Activated naive CD4-positive, alpha-beta T cell treated with anti-CD3 and anti-CD28 coated beads for 36 hours (primary cell): ENCODE measurements at regions of chr5 and their contacts with region 1.

Region 1: DNA sequence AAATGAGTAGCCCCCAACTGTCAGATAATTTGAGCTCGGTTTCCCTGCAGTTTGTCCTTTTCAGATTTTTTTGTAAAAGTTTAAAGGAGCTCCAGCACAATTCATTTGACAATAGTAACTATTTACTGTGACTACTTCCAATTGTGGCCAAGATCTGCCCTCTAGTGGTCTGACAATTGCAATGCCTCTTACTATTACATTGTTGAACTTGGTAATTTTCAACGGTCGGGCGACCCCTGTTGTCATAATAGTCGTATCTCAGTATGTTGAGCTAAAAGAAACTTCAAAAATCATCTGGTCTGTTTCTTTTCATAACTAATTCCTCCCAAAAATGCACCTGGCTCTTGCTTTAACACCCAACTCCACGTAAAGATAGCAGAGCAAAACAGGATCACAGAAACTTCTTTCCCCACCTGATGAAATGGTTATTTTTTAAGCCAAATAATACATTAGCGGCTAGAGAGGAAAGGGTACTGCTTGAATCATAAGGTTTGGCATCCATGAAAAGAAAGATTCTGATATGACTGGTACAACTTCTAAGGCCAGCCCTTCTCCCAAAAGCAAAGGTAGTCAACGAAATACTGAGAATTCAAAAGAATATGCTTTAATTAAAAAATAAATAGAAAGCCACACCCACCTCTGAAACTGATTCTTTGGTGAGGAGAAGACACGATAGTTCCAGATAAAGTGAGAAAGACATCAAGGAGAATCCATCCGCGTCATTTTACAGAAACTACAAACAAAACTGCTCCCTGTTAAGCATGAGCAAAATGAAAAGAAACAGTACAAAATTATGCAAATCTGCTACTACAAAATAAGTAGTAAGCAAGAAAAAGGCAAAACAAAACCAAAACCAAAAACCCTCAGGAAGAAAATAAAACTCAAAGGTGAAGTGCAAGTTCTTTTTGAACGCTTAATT is 76.9 kb upstream of the HTR4 start:
- DNase-seq: peak; percentile 87
- H3K4me3 Mint-ChIP-seq: no peak overlapping the region
- H3K27ac Mint-ChIP-seq: no peak overlapping the region
- H3K4me1 Mint-ChIP-seq: peaks cover 2% of the 10 kb centered on the region
- H3K27me3 Mint-ChIP-seq: peaks cover 3% of the 10 kb centered on the region

Region 2: DNA sequence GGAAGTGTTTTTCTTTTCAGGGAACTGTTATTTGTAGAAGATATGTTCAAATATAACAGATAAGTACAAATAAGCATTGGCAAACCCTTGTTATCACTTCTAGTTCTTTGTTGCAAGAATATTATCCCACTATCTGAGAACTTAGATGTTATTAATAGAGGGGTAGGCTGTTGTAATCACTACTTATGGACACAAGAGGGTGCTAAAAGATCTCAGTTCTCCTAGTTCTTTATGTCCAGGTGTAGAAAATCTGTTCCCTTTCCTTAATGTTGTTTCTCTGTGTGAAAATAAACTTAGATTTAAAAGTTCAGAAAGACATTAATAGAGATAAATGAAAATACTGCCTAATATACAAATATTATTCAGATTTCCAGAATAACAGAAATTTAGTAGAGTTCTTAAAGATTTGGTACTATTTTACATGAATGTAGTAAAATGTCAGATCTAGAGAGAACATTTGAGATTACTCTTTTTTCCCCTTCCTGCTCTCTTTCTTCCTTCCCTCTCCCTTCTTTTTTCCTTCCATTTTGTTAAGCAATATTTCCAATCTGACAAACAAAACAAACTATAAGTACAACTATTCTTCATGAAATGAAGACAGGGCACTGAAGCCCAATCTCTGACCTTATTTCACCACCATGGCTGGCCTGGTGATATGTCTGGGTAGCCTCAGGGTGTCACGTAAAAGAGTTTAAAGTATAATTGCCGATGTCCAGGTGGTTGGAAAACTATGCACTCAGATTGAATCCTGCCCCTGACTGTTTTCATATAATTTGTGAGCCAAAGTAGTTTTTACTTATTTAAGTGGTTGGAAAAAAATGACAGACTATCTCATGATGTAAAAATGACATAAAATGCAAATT is 781.3 kb before region 1 on chr5:
- CTCF ChIA-PET with region 1: interaction called, 7 read pairs
- intact Hi-C with region 1: loop called (anchors 1 kb)
- DNase-seq: no peak
- H3K4me3 Mint-ChIP-seq: no peak overlapping the region
- H3K27ac Mint-ChIP-seq: no peak overlapping the region
- H3K4me1 Mint-ChIP-seq: no peaks in the 10 kb centered on the region
- H3K27me3 Mint-ChIP-seq: peaks cover 2% of the 10 kb centered on the region

Region 3: GRCh38 chr5:148374692-148375360 is 356.4 kb before region 1 on chr5:
- CTCF ChIA-PET with region 1: no interaction called
- intact Hi-C with region 1: loop called (anchors 1 kb)
- DNase-seq: peak; percentile 29
- H3K4me3 Mint-ChIP-seq: no peak overlapping the region
- H3K27ac Mint-ChIP-seq: no peak overlapping the region
- H3K4me1 Mint-ChIP-seq: peaks cover 6% of the 10 kb centered on the region
- H3K27me3 Mint-ChIP-seq: no peaks in the 10 kb centered on the region

Region 4: DNA sequence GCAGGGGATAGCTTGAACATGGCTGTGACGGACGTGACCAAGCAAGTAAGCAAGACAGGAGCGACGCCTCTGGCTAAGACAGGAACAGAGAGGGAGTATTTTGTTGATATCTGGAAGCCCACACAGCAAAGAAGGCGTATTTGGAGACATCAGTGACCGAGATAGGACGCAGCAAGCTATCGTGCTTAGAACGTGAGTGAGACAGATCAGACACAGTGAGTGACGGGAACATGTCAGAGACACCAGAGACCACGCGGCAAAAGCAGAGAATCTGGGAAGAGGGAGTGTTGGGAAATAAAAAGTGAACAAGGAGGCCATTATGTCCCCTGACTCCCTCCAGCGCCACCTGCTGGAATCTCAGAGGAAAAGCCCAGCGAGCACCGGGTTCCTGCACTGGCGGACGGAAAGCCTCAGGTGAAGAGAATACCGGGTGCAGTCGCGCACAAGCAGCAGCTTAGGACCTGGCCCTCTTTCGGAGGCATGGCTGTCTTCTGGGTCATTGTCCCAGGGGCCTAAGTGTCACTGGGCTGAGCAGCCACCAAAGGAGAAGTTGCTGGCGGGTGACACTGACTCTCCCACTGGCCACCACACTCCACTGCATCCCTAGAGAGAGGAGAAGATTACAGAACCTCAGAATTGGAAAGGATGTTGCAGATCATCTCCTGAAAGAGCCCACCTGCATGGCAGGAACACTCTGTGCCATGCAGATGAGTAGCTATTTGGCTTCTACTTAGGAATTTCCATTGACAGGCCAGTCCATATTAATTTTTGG is 248.3 kb before region 1 on chr5:
- CTCF ChIA-PET with region 1: interaction called, 13 read pairs
- intact Hi-C with region 1: loop called (anchors 1 kb)
- DNase-seq: peak; percentile 82
- H3K4me3 Mint-ChIP-seq: no peak overlapping the region
- H3K27ac Mint-ChIP-seq: no peak overlapping the region
- H3K4me1 Mint-ChIP-seq: peaks cover 3% of the 10 kb centered on the region
- H3K27me3 Mint-ChIP-seq: peaks cover 26% of the 10 kb centered on the region

Region 5: GRCh38 chr5:148957591-148958202 is 226.5 kb after region 1 on chr5:
- CTCF ChIA-PET with region 1: interaction called, 227 read pairs
- intact Hi-C with region 1: loop called (anchors 1 kb)
- DNase-seq: peak; percentile 66
- H3K4me3 Mint-ChIP-seq: no peak overlapping the region
- H3K27ac Mint-ChIP-seq: no peak overlapping the region
- H3K4me1 Mint-ChIP-seq: no peaks in the 10 kb centered on the region
- H3K27me3 Mint-ChIP-seq: no peaks in the 10 kb centered on the region

Region 6: DNA sequence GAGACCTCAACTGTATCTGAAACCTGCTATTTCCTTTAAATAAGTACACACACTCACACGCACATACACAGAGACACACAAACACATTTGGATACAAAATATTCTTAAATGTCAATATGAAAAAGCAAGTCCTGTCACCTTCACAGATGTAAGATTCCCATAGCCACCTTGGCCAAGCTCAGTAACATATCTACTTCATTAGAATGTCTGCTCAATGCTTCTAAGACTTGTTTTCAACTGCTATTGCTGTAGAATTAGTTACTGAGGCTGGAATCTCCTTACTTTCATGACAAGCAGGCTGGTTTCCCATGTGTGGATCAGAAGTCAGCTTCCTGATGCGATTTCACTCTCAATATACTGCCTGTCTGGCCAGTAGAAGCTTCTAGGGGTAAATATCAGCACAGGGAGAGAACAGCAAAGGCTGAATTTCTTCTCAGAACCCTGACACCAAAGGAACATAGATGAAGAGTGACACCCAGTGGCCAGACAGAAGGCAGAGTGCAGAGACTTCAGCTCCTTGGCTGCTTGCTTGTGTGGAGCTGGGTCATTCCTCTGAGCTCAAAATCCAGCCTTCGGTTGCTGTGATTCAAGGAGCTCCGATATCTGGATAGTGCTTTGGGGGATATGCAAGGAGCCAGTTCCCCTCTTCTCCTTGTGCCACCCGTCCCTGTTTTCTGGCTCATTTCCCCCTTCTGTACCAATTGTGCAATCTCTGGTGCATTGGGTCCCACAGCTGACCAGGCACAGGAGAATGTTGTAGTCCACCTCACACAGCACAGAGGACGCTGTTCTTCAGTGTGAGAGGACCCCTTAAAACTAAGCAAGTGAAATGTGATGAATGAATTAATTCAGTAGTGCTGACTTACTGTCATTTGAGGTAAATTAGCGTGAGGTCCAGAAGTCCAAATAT is 383.5 kb after region 1 on chr5:
- CTCF ChIA-PET with region 1: interaction called, 23 read pairs
- intact Hi-C with region 1: loop called (anchors 1 kb)
- DNase-seq: peak; percentile 67
- H3K4me3 Mint-ChIP-seq: no peak overlapping the region
- H3K27ac Mint-ChIP-seq: no peak overlapping the region
- H3K4me1 Mint-ChIP-seq: no peaks in the 10 kb centered on the region
- H3K27me3 Mint-ChIP-seq: peaks cover 4% of the 10 kb centered on the region